ENCODE measurements at regions of chr11 and their contacts with region 1.

Region 1: GRCh38 chr11:44727373-44728287 is 868 bp downstream of the TSPAN18 start:
- DNase-seq: peak; percentile 94
- ATAC-seq: peak; percentile 89

Region 2: DNA sequence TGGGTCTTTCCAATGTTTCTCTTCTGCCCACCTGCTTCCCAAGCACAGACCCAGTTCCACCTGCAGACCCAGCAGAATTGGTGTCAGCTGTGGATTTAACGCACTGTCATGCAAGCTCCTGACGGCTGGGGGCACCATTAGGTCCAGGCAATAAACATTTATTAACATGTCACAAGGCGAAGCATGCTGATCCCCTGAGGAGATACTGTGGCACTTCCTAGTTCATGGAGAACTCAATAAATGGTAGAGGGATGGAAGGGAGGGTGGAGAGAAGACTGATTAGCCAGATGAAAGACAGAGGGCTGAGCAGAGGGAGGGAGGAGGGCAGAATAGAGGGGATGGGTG is 69.2 kb before region 1 on chr11:
- intact Hi-C with region 1: no loop called
- DNase-seq: no peak
- ATAC-seq: no peak

Region 3: GRCh38 chr11:44785856-44786606 is 58.4 kb after region 1 on chr11:
- intact Hi-C with region 1: no loop called
- DNase-seq: no peak
- ATAC-seq: peak; percentile 37

Region 4: DNA sequence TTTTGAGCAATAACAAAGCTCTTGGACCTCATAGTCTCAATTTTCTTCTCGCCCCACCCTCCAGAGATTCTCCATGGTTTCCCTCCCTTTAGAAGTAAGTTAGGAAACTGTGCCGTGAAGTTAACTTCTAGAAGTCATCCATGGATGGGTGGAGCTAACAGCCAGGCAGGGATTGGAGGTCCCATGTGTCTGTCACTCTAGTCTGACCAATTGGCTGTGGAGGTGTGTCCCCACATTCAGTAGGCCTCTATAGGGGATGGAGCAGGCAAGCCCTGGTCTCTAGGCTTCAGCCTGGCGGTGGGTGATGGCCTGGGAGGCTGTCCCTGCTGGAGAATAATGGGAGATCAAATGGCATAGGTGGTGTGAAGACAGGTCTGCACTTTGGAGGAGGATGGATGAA is 172.3 kb after region 1 on chr11:
- intact Hi-C with region 1: loop called (anchors 10 kb)
- DNase-seq: no peak
- ATAC-seq: peak; percentile 50